ENCODE measurements at regions of chr19 and their contacts with region 1.

Region 1: GRCh38 chr19:39078436-39079200 is 5.5 kb upstream of the ACP7 start:
- DNase-seq: no peak
- H3K4me3 ChIP-seq: no peak overlapping the region
- H3K4me3 Mint-ChIP-seq: no peak overlapping the region
- H3K27ac ChIP-seq: no peak overlapping the region
- H3K27ac Mint-ChIP-seq: peak overlapping the region in 1 of 7 donors; percentile 12
- H3K4me1 ChIP-seq: peaks cover 20% of the 10 kb centered on the region
- H3K4me1 Mint-ChIP-seq: peaks cover 14 to 28% (median 23%) of the 10 kb centered on the region in 4 donors
- H3K27me3 ChIP-seq: peaks cover 15% of the 10 kb centered on the region
- H3K27me3 Mint-ChIP-seq: peaks cover 20 to 21% of the 10 kb centered on the region in 2 donors

Region 2: DNA sequence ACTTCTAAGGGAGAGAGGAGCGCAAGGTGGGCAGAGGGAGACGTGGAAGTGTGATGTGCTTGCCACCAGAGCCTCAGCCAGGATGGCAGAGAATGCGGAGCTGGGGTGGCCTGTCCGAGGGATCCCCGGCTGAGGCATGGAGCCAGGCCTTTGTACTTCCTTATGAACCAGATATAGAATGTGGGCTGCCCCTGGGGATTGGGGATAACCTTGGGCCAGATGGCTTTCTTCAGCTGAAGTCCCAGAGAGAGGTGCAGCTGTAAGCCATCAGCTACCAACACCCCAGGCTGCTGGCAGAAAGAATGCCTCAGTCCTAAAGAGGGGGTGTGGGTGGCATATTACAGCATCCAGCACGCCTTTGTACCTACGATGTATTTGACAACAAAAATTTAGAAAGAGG is 77.6 kb before region 1 on chr19:
- CTCF ChIA-PET with region 1: no interaction called
- POLR2A ChIA-PET with region 1: no interaction called
- intact Hi-C with region 1: no loop called
- DNase-seq: no peak
- H3K4me3 ChIP-seq: no peak overlapping the region
- H3K4me3 Mint-ChIP-seq: no peak overlapping the region
- H3K27ac ChIP-seq: no peak overlapping the region
- H3K27ac Mint-ChIP-seq: no peak overlapping the region
- H3K4me1 ChIP-seq: no peaks in the 10 kb centered on the region
- H3K4me1 Mint-ChIP-seq: no peaks in the 10 kb centered on the region
- H3K27me3 ChIP-seq: no peaks in the 10 kb centered on the region
- H3K27me3 Mint-ChIP-seq: peaks cover 12 to 20% of the 10 kb centered on the region in 2 donors

Region 3: GRCh38 chr19:39031368-39032062 is 47.1 kb before region 1 on chr19:
- CTCF ChIA-PET with region 1: no interaction called
- POLR2A ChIA-PET with region 1: no interaction called
- intact Hi-C with region 1: loop called (anchors 2 kb)
- DNase-seq: peak; percentile 64 to 84 (median 66)
- H3K4me3 ChIP-seq: peak overlapping the region; percentile 46 to 47
- H3K4me3 Mint-ChIP-seq: peak overlapping the region; percentile 63 to 86 (median 78)
- H3K27ac ChIP-seq: no peak overlapping the region
- H3K27ac Mint-ChIP-seq: peak overlapping the region in 5 of 7 donors; percentile 8 to 55 (median 22)
- H3K4me1 ChIP-seq: peaks cover 11% of the 10 kb centered on the region
- H3K4me1 Mint-ChIP-seq: peaks cover 0 to 11% (median 5%) of the 10 kb centered on the region in 4 donors
- H3K27me3 ChIP-seq: no peaks in the 10 kb centered on the region
- H3K27me3 Mint-ChIP-seq: peaks cover 0 to 1% of the 10 kb centered on the region in 2 donors

Region 4: GRCh38 chr19:39131235-39131755 is 52.7 kb after region 1 on chr19:
- CTCF ChIA-PET with region 1: no interaction called
- POLR2A ChIA-PET with region 1: no interaction called
- intact Hi-C with region 1: no loop called
- DNase-seq: no peak
- H3K4me3 ChIP-seq: no peak overlapping the region
- H3K4me3 Mint-ChIP-seq: no peak overlapping the region
- H3K27ac ChIP-seq: no peak overlapping the region
- H3K27ac Mint-ChIP-seq: peak overlapping the region in 2 of 7 donors; percentile 22
- H3K4me1 ChIP-seq: peaks cover 6% of the 10 kb centered on the region
- H3K4me1 Mint-ChIP-seq: peaks cover 23 to 61% (median 36%) of the 10 kb centered on the region in 4 donors
- H3K27me3 ChIP-seq: no peaks in the 10 kb centered on the region
- H3K27me3 Mint-ChIP-seq: no peaks in the 10 kb centered on the region